ENCODE measurements at regions of chr2 and their contacts with region 1.

Region 1: DNA sequence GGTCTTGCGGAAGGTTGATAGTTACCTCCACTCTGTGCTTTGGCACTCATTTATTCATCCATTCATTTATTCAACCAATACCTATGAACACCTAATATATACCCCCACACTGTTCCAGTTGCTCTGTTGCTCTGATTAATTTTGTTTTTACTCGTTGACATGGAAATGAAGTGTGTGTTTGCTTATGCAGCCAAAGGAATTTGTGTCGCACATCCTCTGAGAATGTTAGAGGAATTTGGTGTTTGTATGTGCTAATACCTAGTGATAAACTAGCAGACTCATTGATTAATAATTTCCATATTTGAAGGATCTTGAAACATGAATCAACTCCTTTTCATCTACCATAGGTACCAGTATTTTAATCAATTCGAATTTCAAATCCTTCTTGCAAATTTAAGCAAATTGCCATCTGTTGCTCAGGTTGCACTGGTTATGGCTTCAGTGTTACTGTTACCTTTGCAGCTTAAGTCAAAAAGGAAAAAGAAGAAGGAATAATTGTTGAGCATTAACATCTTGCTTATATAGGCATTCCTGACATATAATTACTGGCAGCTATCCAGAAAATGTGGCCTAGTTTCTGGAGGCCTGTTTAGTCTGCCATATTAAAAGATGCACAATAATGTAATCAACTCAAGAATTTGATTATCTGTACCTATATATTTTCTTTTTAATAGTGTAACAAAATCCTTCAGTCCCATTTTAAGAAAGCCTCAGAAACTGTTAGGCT is 25.7 kb upstream of the CRIM1 start:
- DNase-seq: no peak
- CTCF ChIP-seq: no peak

Region 2: DNA sequence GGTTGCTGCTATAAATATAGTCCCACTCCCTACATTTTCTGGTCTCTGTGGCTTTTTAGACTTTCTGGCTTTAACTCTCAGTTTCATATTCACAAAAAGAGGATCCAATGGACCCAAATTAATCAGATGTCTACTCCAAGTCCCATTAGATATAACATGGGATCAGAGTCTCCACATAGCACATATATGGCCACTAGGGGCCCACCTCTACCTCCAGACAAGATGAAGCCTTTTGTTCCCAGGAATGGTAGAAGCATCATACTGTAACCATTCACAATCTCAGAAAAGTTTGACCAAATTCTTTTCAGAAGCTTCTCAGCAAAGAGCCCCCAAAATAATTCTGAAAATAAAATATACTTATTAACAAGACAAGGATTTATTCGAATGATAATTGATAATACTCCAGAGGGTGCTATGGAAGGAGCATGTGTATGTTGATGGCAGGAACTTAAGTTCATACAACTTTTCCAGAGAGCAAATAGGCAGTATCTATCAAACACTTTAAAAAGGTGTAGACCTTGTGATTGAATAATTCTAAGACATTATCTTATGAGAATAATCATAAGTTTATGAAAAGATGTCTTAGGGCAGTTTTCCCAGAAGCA is 356.7 kb before region 1 on chr2:
- in situ Hi-C with region 1: loop called (anchors 25 kb)
- DNase-seq: peak; percentile 10
- CTCF ChIP-seq: peak; percentile 69

Region 3: DNA sequence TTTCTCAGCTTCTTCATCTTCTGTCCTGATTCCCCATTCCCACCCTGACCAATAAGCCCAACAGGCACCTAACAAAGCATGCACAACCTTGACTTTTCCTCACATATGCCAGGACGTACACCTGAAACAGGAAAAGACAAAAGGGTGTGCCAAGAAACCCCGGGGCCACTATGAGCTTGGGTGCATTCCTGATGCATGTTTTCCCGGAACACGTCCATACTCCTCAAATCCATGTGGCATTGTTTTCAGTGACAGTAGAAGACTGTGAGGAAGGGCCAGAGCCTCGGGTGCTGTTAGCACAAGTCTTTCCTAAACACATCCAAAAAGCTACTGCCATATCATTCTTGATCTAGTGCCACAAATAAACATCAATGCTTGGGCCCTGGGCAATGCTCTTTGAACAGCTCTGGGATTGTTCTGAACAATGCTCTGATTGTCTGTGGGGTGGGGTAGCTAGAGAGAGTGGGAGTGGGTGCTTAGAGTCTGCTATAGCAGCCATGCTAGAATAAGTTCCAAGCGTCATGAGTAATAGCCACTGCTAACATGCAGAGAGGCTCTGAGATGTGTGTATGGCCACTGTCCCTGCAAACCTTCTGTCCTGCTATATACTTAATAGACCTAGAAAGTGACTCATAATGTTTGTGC is 156.0 kb before region 1 on chr2:
- in situ Hi-C with region 1: no loop called
- DNase-seq: no peak
- CTCF ChIP-seq: no peak

Region 4: DNA sequence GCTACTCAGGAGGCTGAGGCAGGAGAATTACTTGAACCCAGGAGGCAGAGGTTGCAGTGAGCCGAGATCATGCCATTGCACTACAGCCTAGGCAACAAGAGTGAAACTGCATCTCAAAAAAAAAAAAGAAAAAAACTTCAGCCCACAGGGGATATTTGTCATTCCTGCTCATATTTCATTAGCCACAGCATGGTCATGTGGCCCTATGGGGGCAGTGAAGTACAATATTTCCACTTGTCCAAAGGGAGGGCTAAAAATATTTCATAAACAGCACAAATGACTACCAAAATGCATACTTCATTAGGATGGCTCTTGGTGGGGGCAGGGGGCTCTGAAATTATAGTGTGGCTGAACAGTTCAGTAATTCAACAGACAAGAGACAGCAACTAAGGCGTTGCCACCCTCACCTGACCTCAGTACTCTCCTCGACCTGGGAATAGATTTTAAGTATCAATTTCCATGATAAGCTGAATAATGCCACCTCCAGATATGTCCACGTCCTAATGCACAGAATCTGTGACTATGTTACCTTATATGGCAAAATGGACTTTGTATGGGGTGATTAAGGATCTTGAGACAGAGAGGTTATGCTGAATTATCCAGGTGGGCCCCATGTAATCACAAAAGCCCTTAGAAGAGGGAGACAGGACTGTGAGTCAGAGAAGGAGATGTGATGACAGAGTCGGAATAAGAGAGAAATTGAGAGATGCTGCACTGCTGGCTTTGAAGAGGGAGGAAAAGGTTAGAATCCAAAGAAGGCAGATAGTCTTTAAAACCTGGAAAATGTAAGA is 132.5 kb before region 1 on chr2:
- in situ Hi-C with region 1: no loop called
- DNase-seq: no peak
- CTCF ChIP-seq: no peak